AG04449 (cell line): ENCODE measurements at regions of chr7 and their contacts with region 1.

Region 1: GRCh38 chr7:77684030-77684429 is 12.2 kb upstream of the RSBN1L start:
- DNase-seq: peak; percentile 62
- H3K4me3 ChIP-seq: no peak overlapping the region
- CTCF ChIP-seq: no peak

Region 2: DNA sequence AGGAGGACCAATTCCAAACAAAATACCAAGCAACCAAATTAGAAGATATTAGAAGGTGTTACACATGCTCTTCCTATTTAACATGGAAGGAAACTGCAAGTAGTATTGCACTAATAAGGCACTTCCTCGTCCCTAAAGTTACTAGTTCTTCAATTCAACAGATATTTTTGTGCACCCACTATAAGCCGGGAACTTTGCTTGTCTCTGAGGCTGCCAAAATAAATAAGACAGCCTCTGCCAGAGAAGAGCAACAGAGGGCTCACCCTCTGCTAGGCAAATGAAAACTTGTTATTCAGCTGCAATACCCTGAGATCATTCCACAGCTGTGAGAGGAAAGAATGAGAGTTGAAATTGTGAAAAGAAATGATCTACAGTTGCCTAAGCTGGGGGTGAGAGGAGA is 230.5 kb before region 1 on chr7:
- CTCF ChIA-PET with region 1: no interaction called
- POLR2A ChIA-PET with region 1: no interaction called
- DNase-seq: no peak
- H3K4me3 ChIP-seq: no peak overlapping the region
- CTCF ChIP-seq: no peak

Region 3: GRCh38 chr7:77696198-77697028 is 12.4 kb after region 1 on chr7 and contains the start of gene RSBN1L:
- CTCF ChIA-PET with region 1: interaction called, 12 read pairs
- POLR2A ChIA-PET with region 1: interaction called, 9 read pairs
- DNase-seq: peak; percentile 73
- H3K4me3 ChIP-seq: peak within 1 kb of the TSS; percentile 98
- CTCF ChIP-seq: peak; percentile 60